ENCODE measurements at regions of chr20 and their contacts with region 1.

Region 1: GRCh38 chr20:46132705-46133120 is 14.6 kb downstream of the CD40 start:
- DNase-seq: peak; percentile 61 to 77
- ATAC-seq: peak; percentile 90 to 96
- H3K4me3 ChIP-seq: no peak overlapping the region
- H3K27ac ChIP-seq: no peak overlapping the region
- H3K4me1 ChIP-seq: no peaks in the 10 kb centered on the region
- CTCF ChIP-seq: peak; percentile 78
- EP300 ChIP-seq: no peak
- POLR2A ChIP-seq: no peak
- RAD21 ChIP-seq: peak; percentile 89 to 92

Region 2: DNA sequence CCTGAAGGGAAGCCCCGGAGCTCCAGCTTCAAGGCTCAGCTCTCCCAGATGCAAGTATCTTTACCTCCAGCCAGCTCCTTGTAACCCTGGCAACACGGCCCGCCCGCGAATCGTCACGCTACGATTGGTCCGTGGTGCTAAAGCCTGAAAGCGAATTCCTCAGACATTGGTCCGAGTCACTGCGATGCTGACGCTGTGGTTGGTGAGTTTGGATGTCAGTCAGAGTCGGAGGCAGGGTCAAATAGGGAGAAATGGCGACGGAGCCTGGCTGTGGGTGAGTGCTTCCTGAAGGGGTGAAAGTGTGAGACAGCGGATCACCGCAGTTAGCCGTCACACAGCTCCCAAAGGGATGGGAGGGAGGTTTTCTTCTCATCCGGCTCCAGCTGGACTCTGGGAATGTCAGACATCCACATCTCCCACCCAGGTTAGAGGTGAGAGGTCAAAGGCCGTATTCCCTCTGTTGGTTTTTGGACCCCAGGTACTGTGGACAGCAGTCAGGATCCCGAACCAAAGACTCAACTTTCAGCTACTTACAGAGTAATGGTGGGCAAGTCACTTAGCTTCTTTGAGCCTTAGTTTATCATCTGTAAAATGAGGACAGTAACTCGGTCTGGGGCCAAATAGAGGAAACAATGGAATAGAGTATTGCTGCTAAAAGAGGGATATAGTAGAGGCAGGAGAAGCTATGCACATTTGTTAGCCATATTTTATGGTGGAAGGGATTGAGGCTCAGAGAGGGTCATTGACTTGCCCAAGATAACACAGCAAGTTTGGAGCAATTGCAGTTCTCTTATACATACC is 251.5 kb before region 1 on chr20 and contains the start of gene ZSWIM1:
- CTCF ChIA-PET with region 1: no interaction called
- POLR2A ChIA-PET with region 1: no interaction called
- DNase-seq: peak; percentile 98 to 99
- ATAC-seq: peak; percentile 99 to 100
- H3K4me3 ChIP-seq: peak within 1 kb of the TSS; percentile 73
- H3K27ac ChIP-seq: peak within 1 kb of the TSS; percentile 79 to 81
- H3K4me1 ChIP-seq: peaks cover 17% of the 10 kb centered on the region
- CTCF ChIP-seq: no peak
- EP300 ChIP-seq: no peak
- POLR2A ChIP-seq: peak; percentile 89
- RAD21 ChIP-seq: no peak
- polyA plus RNA-seq, gene ZSWIM1: 4.7 and 7.6 TPM in 2 replicates

Region 3: GRCh38 chr20:46119028-46119546 is 13.6 kb before region 1 on chr20:
- CTCF ChIA-PET with region 1: interaction called, 12 read pairs
- POLR2A ChIA-PET with region 1: no interaction called
- DNase-seq: no peak
- ATAC-seq: no peak
- H3K4me3 ChIP-seq: no peak overlapping the region
- H3K27ac ChIP-seq: no peak overlapping the region
- H3K4me1 ChIP-seq: 0 out of 3 replicates have a peak, but pooled peaks cover 3% of the 10 kb centered on the region
- CTCF ChIP-seq: no peak
- EP300 ChIP-seq: no peak
- POLR2A ChIP-seq: no peak
- RAD21 ChIP-seq: no peak

Region 4: DNA sequence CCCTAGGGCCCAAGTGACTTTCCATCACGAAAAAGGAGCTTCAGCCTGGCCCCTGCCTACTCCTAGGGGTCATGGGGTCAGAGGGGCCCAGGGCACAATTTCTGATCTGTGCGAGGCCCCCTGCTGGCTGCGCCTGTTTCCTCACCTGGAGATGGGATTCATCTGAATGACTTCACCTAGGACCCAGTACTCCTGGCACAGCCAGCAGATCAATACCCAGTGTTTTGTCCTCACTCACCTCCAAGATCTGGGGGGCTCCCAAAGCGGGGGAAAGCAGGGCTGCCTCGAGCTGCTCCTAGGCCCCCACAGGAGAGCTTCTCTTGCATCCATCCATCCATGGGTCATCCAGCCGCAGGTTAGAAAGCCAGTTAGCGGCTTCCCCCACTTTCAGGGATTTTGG is 19.2 kb after region 1 on chr20:
- CTCF ChIA-PET with region 1: interaction called, 22 read pairs
- POLR2A ChIA-PET with region 1: no interaction called
- DNase-seq: peak; percentile 14 to 68
- ATAC-seq: peak in 1 of 2 experiments; percentile 87; a peak in 3 of 6 replicates
- H3K4me3 ChIP-seq: no peak overlapping the region
- H3K27ac ChIP-seq: no peak overlapping the region
- H3K4me1 ChIP-seq: no peaks in the 10 kb centered on the region
- CTCF ChIP-seq: peak; percentile 42
- EP300 ChIP-seq: no peak
- POLR2A ChIP-seq: no peak
- RAD21 ChIP-seq: 0 out of 5 replicates have a peak, but pooled peaks of 1 of the 2 experiments have one; percentile 17

Region 5: GRCh38 chr20:46164254-46164653 is 31.5 kb after region 1 on chr20:
- CTCF ChIA-PET with region 1: interaction called, 15 read pairs
- POLR2A ChIA-PET with region 1: no interaction called
- DNase-seq: no peak
- ATAC-seq: no peak
- H3K4me3 ChIP-seq: no peak overlapping the region
- H3K27ac ChIP-seq: no peak overlapping the region
- H3K4me1 ChIP-seq: no peaks in the 10 kb centered on the region
- CTCF ChIP-seq: no peak
- EP300 ChIP-seq: no peak
- POLR2A ChIP-seq: no peak
- RAD21 ChIP-seq: no peak

Region 6: DNA sequence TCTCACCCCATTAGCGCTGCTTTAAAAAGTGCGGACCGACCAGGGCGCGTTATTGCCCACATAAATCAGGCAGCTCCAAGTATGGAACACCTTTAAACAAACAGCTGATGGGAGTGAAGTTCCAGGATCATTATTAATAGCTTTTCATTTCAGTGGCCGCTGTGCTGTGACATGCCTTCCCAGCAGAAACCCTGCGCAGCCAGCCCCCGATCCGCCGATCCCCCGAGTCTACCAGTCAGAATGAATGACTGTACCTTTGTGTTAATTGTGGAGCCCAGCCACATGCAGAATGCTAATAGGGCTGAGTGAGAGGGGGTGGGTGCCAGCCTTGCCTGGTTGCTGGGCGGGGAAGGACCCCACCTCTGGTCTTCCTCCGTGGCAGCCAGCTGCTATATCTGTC is 153.7 kb after region 1 on chr20:
- CTCF ChIA-PET with region 1: interaction called, 14 read pairs
- POLR2A ChIA-PET with region 1: no interaction called
- DNase-seq: no peak
- ATAC-seq: no peak
- H3K4me3 ChIP-seq: no peak overlapping the region
- H3K27ac ChIP-seq: no peak overlapping the region
- H3K4me1 ChIP-seq: peaks cover 13% of the 10 kb centered on the region
- CTCF ChIP-seq: no peak
- EP300 ChIP-seq: no peak
- POLR2A ChIP-seq: no peak
- RAD21 ChIP-seq: no peak

Region 7: GRCh38 chr20:46324960-46325703 is 192.4 kb after region 1 on chr20:
- CTCF ChIA-PET with region 1: interaction called, 19 read pairs
- POLR2A ChIA-PET with region 1: no interaction called
- DNase-seq: peak; percentile 56 to 62
- ATAC-seq: peak; percentile 85 to 95
- H3K4me3 ChIP-seq: no peak overlapping the region
- H3K27ac ChIP-seq: no peak overlapping the region
- H3K4me1 ChIP-seq: no peaks in the 10 kb centered on the region
- CTCF ChIP-seq: peak; percentile 43; the same call in 2 of the 3 replicates
- EP300 ChIP-seq: no peak
- POLR2A ChIP-seq: no peak
- RAD21 ChIP-seq: peak; percentile 38 to 50; a peak in 3 of 5 replicates

Region 8: GRCh38 chr20:46433051-46433450 is 300.3 kb after region 1 on chr20:
- CTCF ChIA-PET with region 1: interaction called, 13 read pairs
- POLR2A ChIA-PET with region 1: no interaction called
- DNase-seq: no peak
- ATAC-seq: no peak
- H3K4me3 ChIP-seq: no peak overlapping the region
- H3K27ac ChIP-seq: no peak overlapping the region
- H3K4me1 ChIP-seq: no peaks in the 10 kb centered on the region
- CTCF ChIP-seq: no peak
- EP300 ChIP-seq: no peak
- POLR2A ChIP-seq: no peak
- RAD21 ChIP-seq: no peak

Measured in A549 (cell line).